Lower leg skin (tissue), 4 donors: ENCODE measurements at regions of chr14 and their contacts with region 1.

Region 1: GRCh38 chr14:20613094-20614037 is 22.2 kb upstream of the RNASE12 start:
- DNase-seq: peak; percentile 85 to 96
- H3K4me3 ChIP-seq: peak overlapping the region; percentile 43
- CTCF ChIP-seq: peak in 1 of 3 donors; percentile 94
- POLR2A ChIP-seq: no peak

Region 2: GRCh38 chr14:20332788-20333493 is 280.4 kb before region 1 on chr14 and contains the start of gene CCNB1IP1:
- intact Hi-C with region 1: loop called (anchors 5 kb)
- DNase-seq: peak; percentile 68 to 88
- H3K4me3 ChIP-seq: peak within 1 kb of the TSS; percentile 48
- CTCF ChIP-seq: no peak
- POLR2A ChIP-seq: no peak
- total RNA-seq, gene CCNB1IP1: 39.1 to 58.1 (median 50.4) TPM

Region 3: DNA sequence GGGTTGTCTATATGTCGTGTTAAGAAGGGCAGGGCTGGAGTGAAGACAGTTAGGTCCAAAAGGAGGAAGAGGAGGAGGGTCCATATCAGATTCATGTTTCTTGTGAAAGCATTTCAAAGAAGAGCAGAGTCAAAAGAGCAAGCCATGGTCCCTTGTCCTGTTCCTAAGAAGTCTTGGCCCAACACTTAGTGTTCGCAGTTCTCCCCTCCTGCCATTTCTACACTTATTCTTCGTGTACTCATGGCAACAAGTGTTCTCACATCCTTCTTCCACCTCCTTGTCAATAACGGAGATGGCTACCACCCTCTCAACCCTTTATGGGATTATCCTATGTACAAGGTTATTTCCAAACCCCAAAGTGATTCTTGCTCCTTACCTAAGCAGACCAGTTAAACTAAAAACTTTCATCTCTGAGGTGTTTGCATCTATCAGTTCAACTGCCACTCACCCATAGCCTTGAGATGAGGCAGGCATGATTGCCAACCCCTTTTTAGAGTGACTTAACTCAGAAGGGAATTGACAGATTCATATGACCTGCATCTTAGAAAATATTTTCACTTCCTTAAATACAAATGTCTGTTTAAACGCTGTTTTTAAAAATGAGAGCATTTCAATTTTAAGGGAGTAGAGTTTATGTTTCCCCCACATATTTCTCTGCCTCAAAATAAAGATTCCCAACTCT is 322.1 kb after region 1 on chr14:
- intact Hi-C with region 1: no loop called
- DNase-seq: no peak
- H3K4me3 ChIP-seq: no peak overlapping the region
- CTCF ChIP-seq: no peak
- POLR2A ChIP-seq: no peak